ENCODE measurements at regions of chr6 and their contacts with region 1.

Region 1: DNA sequence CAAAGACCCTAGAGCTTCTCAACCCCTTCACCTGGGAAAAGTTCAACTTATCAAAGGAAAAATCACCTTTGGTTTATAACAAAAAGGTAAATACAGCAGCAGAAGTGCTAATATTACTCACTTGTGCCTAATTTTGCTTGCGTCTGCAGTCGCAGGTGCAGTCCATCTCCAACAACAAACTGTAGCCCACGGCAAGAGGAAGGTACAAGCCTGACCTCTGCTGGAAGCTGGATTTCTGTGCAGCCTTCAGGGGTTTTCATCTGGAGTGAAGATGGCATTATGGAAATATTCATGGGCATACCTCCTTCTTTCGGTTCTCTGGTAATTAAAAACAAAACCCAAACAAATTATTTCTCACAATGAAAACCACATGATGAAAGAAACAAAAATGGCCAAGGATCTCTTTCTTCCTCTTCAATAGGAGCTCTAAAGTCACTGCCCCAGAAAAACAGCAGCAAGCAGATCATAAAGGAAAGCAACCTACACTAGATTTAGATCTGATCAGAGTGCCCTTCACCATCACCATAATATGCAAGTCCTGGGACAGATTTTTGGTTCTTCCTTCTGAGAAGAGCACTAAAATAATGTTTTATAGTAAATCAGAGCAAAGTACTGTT is 7.8 kb downstream of the UBE3D start:
- DNase-seq: peak in 2 of 5 donors; percentile 19 to 26
- ATAC-seq: peak in 2 of 4 donors; percentile 58 to 69
- H3K4me3 ChIP-seq: no peak overlapping the region
- H3K27ac ChIP-seq: no peak overlapping the region
- H3K4me1 ChIP-seq: peaks cover 0 to 6% (median 0%) of the 10 kb centered on the region in 12 donors
- H3K27me3 ChIP-seq: no peaks in the 10 kb centered on the region
- CTCF ChIP-seq: peak; percentile 35 to 74 (median 65)
- POLR2A ChIP-seq: no peak

Region 2: DNA sequence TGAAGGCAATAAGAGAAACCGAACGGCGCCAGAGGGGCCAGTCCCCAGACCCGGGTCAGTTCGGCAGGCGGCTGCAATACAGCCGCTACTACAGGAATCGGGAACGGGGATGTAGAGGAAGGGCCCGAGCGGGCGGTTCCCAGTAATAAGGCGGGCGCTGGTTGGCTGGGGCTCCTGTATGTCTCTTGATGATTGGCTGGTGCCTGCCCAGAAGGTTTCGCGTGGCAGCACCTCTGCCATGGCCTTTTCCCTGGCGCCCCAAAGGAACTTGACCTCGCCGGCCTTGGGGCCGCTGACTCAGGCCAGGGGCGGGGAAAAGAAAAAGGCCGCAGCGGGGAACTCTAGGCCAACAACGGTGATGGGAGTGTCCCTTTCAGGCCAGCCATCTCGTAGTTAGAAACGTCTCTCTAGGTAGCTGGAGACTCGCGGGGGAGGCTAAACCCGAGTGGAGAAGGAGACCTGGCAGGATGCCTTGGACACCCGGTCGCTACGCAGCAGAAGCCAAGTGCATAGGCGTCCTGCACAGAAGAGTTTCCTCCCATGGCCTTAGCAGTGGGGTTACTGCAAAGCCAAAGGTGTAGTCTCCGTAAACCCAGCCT is 810.1 kb before region 1 on chr6 and contains the start of gene IBTK:
- intact Hi-C with region 1: loop called in 7 of 10 experiments (anchors 5 kb)
- DNase-seq: peak; percentile 95 to 96 (median 96)
- ATAC-seq: peak; percentile 98 to 99 (median 99)
- H3K4me3 ChIP-seq: peak within 1 kb of the TSS; percentile 65 to 98 (median 78)
- H3K27ac ChIP-seq: peak within 1 kb of the TSS; percentile 88 to 97 (median 92)
- H3K4me1 ChIP-seq: peaks cover 0 to 48% (median 22%) of the 10 kb centered on the region in 12 donors
- H3K27me3 ChIP-seq: no peaks in the 10 kb centered on the region
- CTCF ChIP-seq: no peak
- POLR2A ChIP-seq: peak; percentile 46 to 78
- total RNA-seq, gene IBTK: 19.4 to 39.2 (median 29.2) TPM

Region 3: GRCh38 chr6:82257088-82257772 is 800.6 kb before region 1 on chr6:
- intact Hi-C with region 1: loop called in 6 of 10 experiments (anchors 5 kb)
- DNase-seq: no peak
- ATAC-seq: no peak
- H3K4me3 ChIP-seq: no peak overlapping the region
- H3K27ac ChIP-seq: no peak overlapping the region
- H3K4me1 ChIP-seq: peaks cover 0 to 22% (median 1%) of the 10 kb centered on the region in 12 donors
- H3K27me3 ChIP-seq: no peaks in the 10 kb centered on the region
- CTCF ChIP-seq: no peak
- POLR2A ChIP-seq: no peak

Region 4: DNA sequence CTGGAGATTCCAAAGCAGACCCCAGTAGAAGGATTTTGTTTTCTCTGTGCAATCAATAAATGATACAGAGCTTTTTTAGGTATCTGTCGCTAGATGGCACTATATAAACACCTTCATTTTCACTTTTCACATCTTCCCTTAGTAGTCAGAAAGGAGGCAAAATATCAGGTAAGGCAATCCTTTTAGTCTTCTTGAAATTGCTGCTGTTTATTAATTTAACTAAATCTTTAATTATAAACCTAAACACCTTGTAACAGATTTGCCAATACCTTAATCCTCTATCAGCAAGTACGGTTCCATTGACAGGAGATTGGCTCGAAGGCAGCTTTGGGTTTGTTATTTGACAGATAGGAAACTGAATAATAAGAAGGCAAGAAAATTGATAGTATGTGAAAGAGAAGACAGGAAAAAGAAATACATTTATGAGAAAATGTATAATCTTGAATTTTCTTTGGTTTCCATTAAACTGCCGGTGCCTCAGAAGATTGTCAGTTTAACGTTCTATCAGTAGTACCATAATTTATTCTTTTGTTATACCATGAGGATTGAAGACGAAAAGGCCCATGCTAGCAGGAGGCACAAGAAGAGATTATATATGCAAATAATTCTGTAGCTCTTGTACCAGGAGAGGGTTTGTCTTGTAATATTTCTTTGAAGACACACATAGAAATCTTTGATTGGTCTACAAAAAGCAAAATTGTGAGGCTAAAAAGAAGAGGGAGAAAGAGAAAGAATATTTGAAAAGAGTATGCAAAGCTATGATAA is 786.8 kb before region 1 on chr6:
- intact Hi-C with region 1: loop called (anchors 1 to 5 kb)
- DNase-seq: no peak
- ATAC-seq: no peak
- H3K4me3 ChIP-seq: no peak overlapping the region
- H3K27ac ChIP-seq: no peak overlapping the region
- H3K4me1 ChIP-seq: no peaks in the 10 kb centered on the region
- H3K27me3 ChIP-seq: no peaks in the 10 kb centered on the region
- CTCF ChIP-seq: peak; percentile 52 to 74 (median 62)
- POLR2A ChIP-seq: no peak

Region 5: DNA sequence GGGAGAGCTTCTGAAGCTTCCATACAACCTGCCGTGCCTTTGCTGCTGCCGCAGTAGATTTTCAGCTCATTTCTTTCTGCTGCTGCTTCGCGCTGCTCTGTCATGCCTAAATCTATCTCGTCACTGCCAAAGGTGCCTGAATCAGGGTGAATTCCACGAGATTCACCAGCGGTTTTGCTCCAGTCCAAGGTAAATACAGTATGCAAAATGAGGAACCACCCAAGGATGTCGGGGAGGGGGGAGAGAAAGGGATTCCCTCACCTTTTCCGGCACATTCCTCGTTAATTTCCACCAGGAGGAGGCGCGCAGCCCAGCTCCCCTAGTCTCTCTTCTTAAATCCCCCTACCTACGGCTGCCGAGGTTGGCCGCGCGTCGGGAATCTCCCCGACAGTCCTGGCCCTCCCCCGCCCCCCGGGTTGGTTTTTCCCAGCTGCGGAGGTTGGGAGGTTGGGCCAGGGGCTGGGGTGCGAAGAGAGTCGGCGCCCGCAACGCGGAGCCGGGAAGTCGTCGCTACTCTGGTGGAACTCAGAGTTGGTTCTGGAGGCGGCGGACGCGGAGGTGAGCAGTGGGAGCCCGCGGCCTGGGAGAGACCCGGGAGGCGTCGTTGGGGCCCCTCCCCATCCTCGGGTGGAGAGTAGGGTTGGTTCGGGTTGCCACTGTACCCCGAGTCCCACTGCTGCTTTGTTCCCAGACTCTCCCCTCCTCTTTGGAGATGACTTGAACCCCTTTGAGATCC is 694.3 kb before region 1 on chr6 and contains the start of gene TPBG:
- intact Hi-C with region 1: loop called in 1 of 10 experiments (anchors 10 kb)
- DNase-seq: peak; percentile 44 to 70 (median 45)
- ATAC-seq: peak; percentile 74 to 84 (median 78)
- H3K4me3 ChIP-seq: peak within 1 kb of the TSS; percentile 35 to 76 (median 64)
- H3K27ac ChIP-seq: peak within 1 kb of the TSS in 11 of 12 donors; percentile 35 to 80 (median 75)
- H3K4me1 ChIP-seq: peaks cover 0 to 25% (median 6%) of the 10 kb centered on the region in 12 donors
- H3K27me3 ChIP-seq: peaks cover 0 to 63% (median 17%) of the 10 kb centered on the region in 9 donors
- CTCF ChIP-seq: peak in 4 of 12 donors; percentile 10 to 29 (median 22)
- POLR2A ChIP-seq: no peak
- total RNA-seq, gene TPBG: 1.4 to 10.0 (median 2.8) TPM

Region 6: GRCh38 chr6:82616386-82617028 is 441.3 kb before region 1 on chr6:
- intact Hi-C with region 1: no loop called
- DNase-seq: no peak
- ATAC-seq: no peak
- H3K4me3 ChIP-seq: no peak overlapping the region
- H3K27ac ChIP-seq: no peak overlapping the region
- H3K4me1 ChIP-seq: no peaks in the 10 kb centered on the region
- H3K27me3 ChIP-seq: no peaks in the 10 kb centered on the region
- CTCF ChIP-seq: peak in 2 of 12 donors; percentile 7 to 15
- POLR2A ChIP-seq: no peak

Region 7: GRCh38 chr6:82904860-82905259 is 153.0 kb before region 1 on chr6:
- intact Hi-C with region 1: loop called in 1 of 10 experiments (anchors 5 kb)
- DNase-seq: no peak
- ATAC-seq: no peak
- H3K4me3 ChIP-seq: no peak overlapping the region
- H3K27ac ChIP-seq: no peak overlapping the region
- H3K4me1 ChIP-seq: no peaks in the 10 kb centered on the region
- H3K27me3 ChIP-seq: no peaks in the 10 kb centered on the region
- CTCF ChIP-seq: no peak
- POLR2A ChIP-seq: no peak